ENCODE measurements at regions of chr1 and their contacts with region 1.

Region 1: DNA sequence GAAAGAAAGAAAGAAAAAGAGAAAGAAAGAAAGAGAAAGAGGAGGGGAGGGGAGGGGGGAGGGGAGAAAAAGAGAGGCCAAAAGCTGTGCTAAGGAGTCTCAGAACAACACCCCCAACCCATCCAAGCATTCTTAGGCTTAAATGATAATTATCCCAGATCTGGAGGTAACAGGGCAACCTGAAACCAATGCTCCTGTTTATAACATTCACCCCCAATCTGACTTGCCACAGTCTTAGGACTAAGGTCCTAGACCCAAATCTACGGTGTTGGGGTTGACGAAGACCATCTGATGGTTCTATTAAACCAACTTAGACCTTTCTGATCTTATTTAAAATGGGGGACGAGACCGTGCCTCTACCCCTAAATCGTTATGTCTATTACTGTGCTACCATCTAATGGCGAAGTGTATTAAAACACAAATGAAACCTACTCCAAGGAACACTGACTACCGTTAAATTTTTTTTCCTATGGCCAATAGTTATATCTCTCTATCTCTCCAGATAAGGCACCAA is 119.3 kb upstream of the CDC42BPA start:
- DNase-seq: peak; percentile 30
- ATAC-seq: peak; percentile 91
- H3K4me3 ChIP-seq: peak overlapping the region; percentile 31 to 62
- H3K27ac ChIP-seq: peak overlapping the region; percentile 52; the same call in 1 of the 2 replicates
- H3K4me1 ChIP-seq: peaks cover 2% of the 10 kb centered on the region; the same call in 1 of the 2 replicates
- H3K27me3 ChIP-seq: no peaks in the 10 kb centered on the region; the same call in 1 of the 2 replicates
- CTCF ChIP-seq: peak; percentile 64

Region 2: DNA sequence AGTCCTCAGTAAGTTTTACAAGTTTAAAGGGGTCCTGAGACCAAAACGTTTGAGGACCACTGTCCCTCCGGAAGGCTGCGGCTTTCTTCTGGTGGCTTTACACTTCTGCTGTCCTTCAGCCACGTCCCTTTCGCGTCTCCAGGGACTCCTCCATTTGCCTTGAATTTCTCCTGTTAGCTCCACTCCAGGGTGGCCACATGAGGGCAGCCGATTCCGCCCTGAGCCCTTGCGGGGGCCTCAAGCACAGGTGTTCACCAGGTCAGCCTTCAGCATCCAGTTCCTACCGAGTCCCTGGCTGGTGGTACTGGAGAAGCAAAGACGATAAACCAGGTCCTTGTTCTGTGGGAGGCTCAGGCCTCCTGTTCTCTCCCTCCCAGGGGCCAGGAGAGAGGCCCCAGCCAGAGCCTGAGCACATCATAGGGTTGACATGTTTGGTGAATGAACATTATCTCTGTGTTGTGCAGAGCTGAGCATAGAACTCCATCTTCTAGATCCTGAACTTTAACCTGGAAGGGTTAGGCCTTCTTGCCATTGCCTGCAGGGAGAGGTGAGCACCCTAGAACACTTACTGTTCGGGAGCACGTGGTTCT is 524.9 kb before region 1 on chr1:
- CTCF ChIA-PET with region 1: no interaction called
- POLR2A ChIA-PET with region 1: no interaction called
- in situ Hi-C with region 1: no loop called
- intact Hi-C with region 1: loop called (anchors 5 kb)
- DNase-seq: peak; percentile 12
- ATAC-seq: peak; percentile 94
- H3K4me3 ChIP-seq: no peak overlapping the region
- H3K27ac ChIP-seq: no peak overlapping the region
- H3K4me1 ChIP-seq: no peaks in the 10 kb centered on the region
- H3K27me3 ChIP-seq: no peaks in the 10 kb centered on the region
- CTCF ChIP-seq: peak; percentile 90

Region 3: DNA sequence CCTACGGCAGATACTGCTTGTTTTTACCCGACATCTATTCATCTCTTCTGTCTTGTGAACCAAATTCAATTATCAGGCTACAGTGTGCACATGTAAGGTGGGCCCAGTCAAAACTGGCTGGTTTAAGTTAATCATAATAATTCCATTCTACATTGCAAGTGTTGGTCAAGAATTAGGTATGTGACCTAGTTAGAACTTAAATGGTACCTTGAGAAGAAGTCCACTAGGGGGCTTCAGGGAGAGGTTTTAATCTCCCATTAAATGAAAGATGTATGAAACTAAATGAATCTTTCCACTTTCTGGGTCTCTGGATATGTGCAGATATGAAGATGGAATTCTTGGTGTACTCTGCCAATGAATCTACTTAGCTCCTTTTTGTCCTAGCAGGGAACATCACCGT is 306.4 kb before region 1 on chr1:
- CTCF ChIA-PET with region 1: no interaction called
- POLR2A ChIA-PET with region 1: no interaction called
- in situ Hi-C with region 1: no loop called
- intact Hi-C with region 1: loop called (anchors 2 kb)
- DNase-seq: no peak
- ATAC-seq: 0 out of 2 replicates have a peak, but pooled peaks have one; percentile 38
- H3K4me3 ChIP-seq: no peak overlapping the region
- H3K27ac ChIP-seq: no peak overlapping the region
- H3K4me1 ChIP-seq: no peaks in the 10 kb centered on the region
- H3K27me3 ChIP-seq: no peaks in the 10 kb centered on the region
- CTCF ChIP-seq: peak; percentile 64; the same call in 1 of the 2 replicates

Region 4: GRCh38 chr1:227234998-227235405 is 202.6 kb before region 1 on chr1:
- CTCF ChIA-PET with region 1: no interaction called
- POLR2A ChIA-PET with region 1: no interaction called
- in situ Hi-C with region 1: no loop called
- intact Hi-C with region 1: loop called (anchors 1 kb)
- DNase-seq: peak; percentile 12
- ATAC-seq: peak; percentile 84
- H3K4me3 ChIP-seq: no peak overlapping the region
- H3K27ac ChIP-seq: no peak overlapping the region
- H3K4me1 ChIP-seq: no peaks in the 10 kb centered on the region
- H3K27me3 ChIP-seq: no peaks in the 10 kb centered on the region
- CTCF ChIP-seq: peak; percentile 76

Region 5: GRCh38 chr1:227318003-227318852 is 119.3 kb before region 1 on chr1 and contains the start of gene CDC42BPA:
- CTCF ChIA-PET with region 1: no interaction called
- POLR2A ChIA-PET with region 1: no interaction called
- in situ Hi-C with region 1: no loop called
- intact Hi-C with region 1: loop called (anchors 5 kb)
- DNase-seq: no peak
- ATAC-seq: peak; percentile 93
- H3K4me3 ChIP-seq: peak within 1 kb of the TSS; percentile 92 to 97
- H3K27ac ChIP-seq: peak within 1 kb of the TSS; percentile 90
- H3K4me1 ChIP-seq: peaks cover 12% of the 10 kb centered on the region
- H3K27me3 ChIP-seq: no peaks in the 10 kb centered on the region
- CTCF ChIP-seq: no peak
- total RNA-seq, gene CDC42BPA: 32.8 TPM

Measured in Panc1 (cell line).